BJ (cell line): ENCODE measurements at regions of chr1 and their contacts with region 1.

Region 1: GRCh38 chr1:77533660-77534305 is 148.7 kb downstream of the ZZZ3 start:
- DNase-seq: no peak
- H3K4me3 ChIP-seq: no peak overlapping the region
- H3K27me3 ChIP-seq: no peaks in the 10 kb centered on the region
- CTCF ChIP-seq: peak; percentile 85

Region 2: GRCh38 chr1:77333501-77333900 is 200.3 kb before region 1 on chr1:
- CTCF ChIA-PET with region 1: no interaction called
- POLR2A ChIA-PET with region 1: interaction called, 17 read pairs
- DNase-seq: no peak
- H3K4me3 ChIP-seq: no peak overlapping the region
- H3K27me3 ChIP-seq: no peaks in the 10 kb centered on the region
- CTCF ChIP-seq: no peak

Region 3: GRCh38 chr1:77514921-77515776 is 18.6 kb before region 1 on chr1:
- CTCF ChIA-PET with region 1: interaction called, 14 read pairs
- POLR2A ChIA-PET with region 1: no interaction called
- DNase-seq: peak; percentile 62
- H3K4me3 ChIP-seq: no peak overlapping the region
- H3K27me3 ChIP-seq: no peaks in the 10 kb centered on the region
- CTCF ChIP-seq: peak; percentile 41